PC-3 (cell line): ENCODE measurements at regions of chr17 and their contacts with region 1.

Region 1: DNA sequence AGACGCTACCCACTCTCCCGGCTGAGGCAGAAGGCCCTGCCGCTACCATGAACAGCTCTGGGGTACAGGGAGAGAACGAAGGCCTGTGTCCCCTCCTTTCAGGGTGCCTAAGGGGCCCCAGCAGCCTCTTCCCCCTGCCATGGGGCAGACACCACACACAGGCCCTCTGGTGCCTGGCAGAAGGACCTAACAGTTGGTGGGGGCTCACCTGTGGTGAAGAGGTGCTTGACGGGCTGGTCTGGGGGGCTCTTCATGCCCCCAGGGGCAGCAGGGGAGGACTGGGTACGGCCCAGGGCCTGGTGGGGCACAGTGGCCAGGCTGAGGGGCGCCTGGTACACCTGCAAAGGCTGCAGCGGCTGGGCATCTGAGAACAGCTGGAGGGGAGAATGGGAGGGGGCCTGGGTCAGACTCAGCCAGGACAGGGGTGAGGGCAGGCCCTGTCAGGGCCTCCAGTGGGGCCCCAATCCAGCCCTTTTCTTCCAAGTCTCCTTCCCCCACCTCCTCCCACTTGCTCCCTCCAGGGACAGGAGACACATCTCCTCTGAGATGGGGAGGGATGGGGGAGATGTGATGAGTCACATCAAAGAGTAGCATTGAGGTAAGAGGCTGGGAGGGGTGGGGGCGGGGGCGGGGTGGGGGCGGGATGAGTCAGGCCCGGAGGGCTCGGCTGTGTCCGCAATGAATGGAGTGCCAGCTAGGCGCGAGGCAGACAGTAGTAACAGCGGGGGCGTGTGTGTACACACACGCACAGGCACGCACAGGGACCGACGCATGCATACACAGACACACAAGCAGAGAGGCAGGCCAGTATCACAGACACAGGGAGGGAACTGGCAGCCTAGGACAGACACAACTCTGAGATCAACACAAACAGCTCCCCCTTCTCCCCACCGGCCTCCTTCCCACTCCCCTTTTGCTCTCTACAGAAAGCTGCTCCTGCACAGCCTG is 16.1 kb downstream of the G6PC3 start:
- DNase-seq: peak; percentile 92
- ATAC-seq: peak; percentile 87
- H3K4me3 ChIP-seq: peak overlapping the region; percentile 17; the same call in 1 of the 2 replicates
- H3K27ac ChIP-seq: peak overlapping the region; percentile 79
- H3K4me1 ChIP-seq: peaks cover 18% of the 10 kb centered on the region
- H3K27me3 ChIP-seq: no peaks in the 10 kb centered on the region
- CTCF ChIP-seq: no peak

Region 2: DNA sequence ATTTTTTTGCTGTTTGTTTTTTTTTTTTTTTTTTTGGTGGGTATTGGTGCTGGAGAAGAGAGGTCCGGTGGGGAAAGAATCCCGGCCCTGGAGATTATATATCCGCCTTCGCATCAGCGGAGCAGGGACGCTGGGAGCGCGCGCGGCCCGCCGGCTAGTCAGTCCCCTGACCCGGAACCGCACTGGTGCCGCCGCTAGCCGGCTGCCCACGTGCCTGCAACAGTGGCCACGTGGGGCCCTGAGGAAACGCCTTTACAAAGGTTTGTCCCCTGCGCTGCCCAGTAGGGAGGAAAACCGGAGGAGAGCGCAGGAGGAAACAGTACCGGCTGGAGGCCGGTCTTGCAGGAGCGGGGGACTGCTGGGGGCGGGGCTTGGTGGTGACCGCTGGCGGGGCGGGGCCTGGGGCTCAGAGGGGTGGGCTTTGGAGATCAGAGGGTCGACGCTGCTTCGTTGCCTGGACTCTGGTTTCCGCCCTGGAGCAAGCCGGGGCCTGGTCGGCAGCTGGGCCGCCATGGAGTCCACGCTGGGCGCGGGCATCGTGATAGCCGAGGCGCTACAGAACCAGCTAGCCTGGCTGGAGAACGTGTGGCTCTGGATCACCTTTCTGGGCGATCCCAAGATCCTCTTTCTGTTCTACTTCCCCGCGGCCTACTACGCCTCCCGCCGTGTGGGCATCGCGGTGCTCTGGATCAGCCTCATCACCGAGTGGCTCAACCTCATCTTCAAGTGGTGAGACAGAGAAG is 16.0 kb before region 1 on chr17 and contains the start of gene G6PC3:
- CTCF ChIA-PET with region 1: no interaction called
- POLR2A ChIA-PET with region 1: interaction called, 16 read pairs
- intact Hi-C with region 1: no loop called
- DNase-seq: peak; percentile 99
- ATAC-seq: peak; percentile 79
- H3K4me3 ChIP-seq: peak within 1 kb of the TSS; percentile 70
- H3K27ac ChIP-seq: peak within 1 kb of the TSS; percentile 85
- H3K4me1 ChIP-seq: peaks cover 26% of the 10 kb centered on the region
- H3K27me3 ChIP-seq: no peaks in the 10 kb centered on the region
- CTCF ChIP-seq: no peak
- total RNA-seq, gene G6PC3: 60.1 and 69.5 TPM in 2 replicates

Region 3: GRCh38 chr17:44115585-44116415 is 29.2 kb after region 1 on chr17:
- CTCF ChIA-PET with region 1: interaction called, 12 read pairs
- POLR2A ChIA-PET with region 1: no interaction called
- intact Hi-C with region 1: no loop called
- DNase-seq: peak; percentile 53
- ATAC-seq: peak; percentile 18; the same call in 1 of the 2 replicates
- H3K4me3 ChIP-seq: no peak overlapping the region
- H3K27ac ChIP-seq: no peak overlapping the region
- H3K4me1 ChIP-seq: peaks cover 10% of the 10 kb centered on the region
- H3K27me3 ChIP-seq: no peaks in the 10 kb centered on the region
- CTCF ChIP-seq: peak; percentile 90

Region 4: GRCh38 chr17:44123356-44124117 is 36.9 kb after region 1 on chr17 and contains the start of gene HDAC5:
- CTCF ChIA-PET with region 1: interaction called, 18 read pairs
- POLR2A ChIA-PET with region 1: interaction called, 6 read pairs
- intact Hi-C with region 1: no loop called
- DNase-seq: peak; percentile 97
- ATAC-seq: peak; percentile 92
- H3K4me3 ChIP-seq: peak within 1 kb of the TSS; percentile 72
- H3K27ac ChIP-seq: peak within 1 kb of the TSS; percentile 57
- H3K4me1 ChIP-seq: peaks cover 13% of the 10 kb centered on the region
- H3K27me3 ChIP-seq: no peaks in the 10 kb centered on the region
- CTCF ChIP-seq: peak; percentile 77
- total RNA-seq, gene HDAC5: 39.1 and 47.1 TPM in 2 replicates

Region 5: GRCh38 chr17:44170499-44171201 is 84.0 kb after region 1 on chr17 and contains the start of gene ASB16:
- CTCF ChIA-PET with region 1: interaction called, 42 read pairs
- POLR2A ChIA-PET with region 1: interaction called, 5 read pairs
- intact Hi-C with region 1: no loop called
- DNase-seq: no peak
- ATAC-seq: no peak; the same call in 1 of the 2 replicates
- H3K4me3 ChIP-seq: no peak within 1 kb of the TSS
- H3K27ac ChIP-seq: no peak within 1 kb of the TSS
- H3K4me1 ChIP-seq: peaks cover 9% of the 10 kb centered on the region
- H3K27me3 ChIP-seq: no peaks in the 10 kb centered on the region
- CTCF ChIP-seq: no peak
- total RNA-seq, gene ASB16: 0.35 and 0.51 TPM in 2 replicates

Region 6: GRCh38 chr17:45971698-45972141 is 1885.1 kb after region 1 on chr17:
- CTCF ChIA-PET with region 1: no interaction called
- POLR2A ChIA-PET with region 1: interaction called, 15 read pairs
- intact Hi-C with region 1: no loop called
- DNase-seq: no peak
- ATAC-seq: no peak
- H3K4me3 ChIP-seq: no peak overlapping the region
- H3K27ac ChIP-seq: no peak overlapping the region
- H3K4me1 ChIP-seq: no peaks in the 10 kb centered on the region
- H3K27me3 ChIP-seq: peaks cover 16% of the 10 kb centered on the region
- CTCF ChIP-seq: 0 out of 2 replicates have a peak, but pooled peaks have one; percentile 14